Activated CD8-positive, alpha-beta T cell treated with anti-CD3 and anti-CD28 coated beads for 36 hours (primary cell): ENCODE measurements at regions of chr7 and their contacts with region 1.

Region 1: GRCh38 chr7:121385800-121386179 is 10.3 kb downstream of the FAM3C start:
- DNase-seq: no peak
- ATAC-seq: peak; percentile 86
- H3K4me3 Mint-ChIP-seq: no peak overlapping the region
- H3K27ac Mint-ChIP-seq: peak overlapping the region; percentile 53
- H3K4me1 Mint-ChIP-seq: peaks cover 73% of the 10 kb centered on the region
- H3K27me3 Mint-ChIP-seq: no peaks in the 10 kb centered on the region
- CTCF ChIP-seq: no peak

Region 2: GRCh38 chr7:121366852-121367431 is 18.8 kb before region 1 on chr7:
- CTCF ChIA-PET with region 1: interaction called, 23 read pairs
- POLR2A ChIA-PET with region 1: no interaction called
- intact Hi-C with region 1: no loop called
- DNase-seq: peak; percentile 33
- ATAC-seq: peak; percentile 45
- H3K4me3 Mint-ChIP-seq: no peak overlapping the region
- H3K27ac Mint-ChIP-seq: no peak overlapping the region
- H3K4me1 Mint-ChIP-seq: peaks cover 24% of the 10 kb centered on the region
- H3K27me3 Mint-ChIP-seq: no peaks in the 10 kb centered on the region
- CTCF ChIP-seq: peak; percentile 84

Region 3: GRCh38 chr7:121372376-121373010 is 13.3 kb before region 1 on chr7:
- CTCF ChIA-PET with region 1: interaction called, 23 read pairs
- POLR2A ChIA-PET with region 1: interaction called, 3 read pairs
- intact Hi-C with region 1: no loop called
- DNase-seq: peak; percentile 13
- ATAC-seq: peak; percentile 81
- H3K4me3 Mint-ChIP-seq: peak overlapping the region; percentile 34
- H3K27ac Mint-ChIP-seq: peak overlapping the region; percentile 88
- H3K4me1 Mint-ChIP-seq: peaks cover 48% of the 10 kb centered on the region
- H3K27me3 Mint-ChIP-seq: no peaks in the 10 kb centered on the region
- CTCF ChIP-seq: no peak

Region 4: DNA sequence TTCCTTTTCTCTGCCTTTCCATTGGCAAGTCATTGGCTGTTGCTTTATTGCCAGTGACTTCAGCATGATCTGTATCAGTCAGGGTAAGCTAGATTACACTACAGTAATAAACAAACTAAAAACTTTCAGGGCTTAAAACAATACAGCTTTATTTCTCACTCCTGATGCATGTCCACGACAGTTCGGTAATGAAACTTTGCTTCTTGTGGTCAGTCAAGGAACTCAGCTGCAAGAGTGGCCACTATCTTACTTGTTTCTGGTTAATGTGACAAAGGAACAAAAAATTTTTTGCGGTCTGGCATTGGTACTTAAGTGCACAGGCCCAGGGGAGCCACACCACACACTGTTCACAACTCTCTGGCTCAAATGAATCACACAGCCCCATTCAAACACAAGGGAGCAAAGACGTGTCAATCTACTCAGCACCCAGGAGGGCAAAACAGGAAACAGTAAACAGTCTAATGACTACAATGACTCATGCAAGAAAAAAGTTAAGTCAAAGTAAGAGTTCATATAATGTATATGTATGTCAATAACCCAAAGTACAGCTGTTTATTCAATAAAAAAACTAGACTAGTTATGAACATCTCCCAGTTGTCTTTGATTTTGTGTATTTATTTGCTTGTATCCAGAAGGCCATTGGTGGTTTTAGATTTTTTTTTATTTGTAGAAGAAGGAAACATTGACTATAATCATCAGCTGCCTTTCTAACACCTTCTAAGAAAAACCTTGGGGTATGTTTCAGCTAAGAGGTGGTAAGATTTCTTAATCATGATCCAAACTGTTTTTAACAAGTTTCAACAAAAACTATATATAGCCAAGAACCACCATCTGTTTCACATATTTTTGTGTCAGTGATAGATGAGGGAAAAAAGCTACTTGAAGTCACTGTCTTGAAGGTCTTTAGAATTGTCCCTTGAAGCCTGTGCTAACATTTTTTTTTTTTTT is 144.7 kb after region 1 on chr7:
- CTCF ChIA-PET with region 1: no interaction called
- POLR2A ChIA-PET with region 1: no interaction called
- intact Hi-C with region 1: loop called (anchors 5 kb)
- DNase-seq: peak; percentile 84
- ATAC-seq: peak; percentile 97
- H3K4me3 Mint-ChIP-seq: peak overlapping the region; percentile 17
- H3K27ac Mint-ChIP-seq: peak overlapping the region; percentile 91
- H3K4me1 Mint-ChIP-seq: peaks cover 37% of the 10 kb centered on the region
- H3K27me3 Mint-ChIP-seq: peaks cover 11% of the 10 kb centered on the region
- CTCF ChIP-seq: no peak